ENCODE measurements at regions of chr2 and their contacts with region 1.

Region 1: GRCh38 chr2:144834998-144835633 is 315.2 kb upstream of the ZEB2 start:
- DNase-seq: no peak
- H3K4me3 ChIP-seq: peak overlapping the region in 2 of 3 donors; percentile 4 to 25
- H3K27ac ChIP-seq: peak overlapping the region in 1 of 2 donors; percentile 28
- H3K4me1 ChIP-seq: no peaks in the 10 kb centered on the region
- H3K27me3 ChIP-seq: no peaks in the 10 kb centered on the region
- CTCF ChIP-seq: no peak
- POLR2A ChIP-seq: no peak

Region 2: DNA sequence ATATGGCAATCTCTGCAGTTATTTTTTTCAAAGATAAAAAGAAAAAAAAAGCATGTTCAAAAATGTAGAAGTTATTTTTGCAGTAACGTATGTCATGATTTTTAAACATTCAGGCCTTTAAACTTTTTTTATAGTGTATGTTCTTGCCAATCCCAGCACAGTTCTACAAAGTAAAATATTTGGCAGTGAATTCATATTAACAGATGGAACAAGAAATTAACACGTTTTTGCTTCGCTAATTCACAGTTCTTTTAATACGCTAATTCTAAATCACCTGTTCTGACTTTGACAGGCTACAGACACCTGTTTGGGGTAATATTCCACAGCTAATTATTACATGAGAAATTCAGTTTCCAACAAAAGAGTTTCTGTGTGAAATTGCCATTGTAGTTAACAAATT is 1522.7 kb before region 1 on chr2:
- intact Hi-C with region 1: no loop called
- DNase-seq: no peak
- H3K4me3 ChIP-seq: no peak overlapping the region
- H3K27ac ChIP-seq: no peak overlapping the region
- H3K4me1 ChIP-seq: no peaks in the 10 kb centered on the region
- H3K27me3 ChIP-seq: no peaks in the 10 kb centered on the region
- CTCF ChIP-seq: no peak
- POLR2A ChIP-seq: no peak

Region 3: DNA sequence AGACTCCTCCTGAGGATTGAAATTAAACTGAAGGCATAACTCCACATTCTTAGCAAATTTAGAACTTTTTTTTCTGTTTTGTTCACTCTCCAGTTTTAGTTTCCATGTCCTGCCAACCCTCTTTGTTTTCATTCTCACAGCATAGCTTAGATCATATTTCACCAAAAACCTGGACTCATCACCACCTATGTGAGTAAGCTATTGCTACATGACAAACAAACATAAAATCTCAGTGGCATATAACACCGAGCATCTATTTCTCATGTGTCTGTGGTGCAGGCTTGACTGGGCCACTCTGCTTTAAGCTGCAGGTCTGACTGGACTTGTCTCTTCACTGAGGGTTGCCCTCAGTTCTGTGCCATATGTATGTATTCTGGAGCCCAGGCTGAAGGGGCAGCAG is 1320.7 kb before region 1 on chr2:
- intact Hi-C with region 1: no loop called
- DNase-seq: no peak
- H3K4me3 ChIP-seq: no peak overlapping the region
- H3K27ac ChIP-seq: no peak overlapping the region
- H3K4me1 ChIP-seq: no peaks in the 10 kb centered on the region
- H3K27me3 ChIP-seq: no peaks in the 10 kb centered on the region
- CTCF ChIP-seq: no peak
- POLR2A ChIP-seq: no peak

Region 4: DNA sequence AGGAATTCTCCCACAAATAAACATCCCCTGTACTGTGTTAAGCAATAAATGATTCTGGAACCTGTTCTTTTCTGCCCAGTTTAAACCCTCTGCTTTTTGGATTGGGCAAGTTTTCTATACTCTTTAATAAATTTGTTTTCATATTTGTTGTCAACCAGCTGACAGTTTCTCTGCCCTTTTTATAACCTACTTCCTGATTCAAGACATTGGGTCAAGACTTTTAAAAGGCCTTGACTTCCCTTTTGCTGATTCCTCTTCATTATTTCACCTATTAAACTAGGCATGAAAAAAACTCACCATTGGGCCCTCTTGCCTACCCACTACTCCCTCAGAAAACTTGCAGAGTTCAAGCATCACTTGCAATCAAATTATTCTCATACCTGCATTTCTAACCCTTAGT is 1246.4 kb before region 1 on chr2:
- intact Hi-C with region 1: loop called (anchors 5 kb)
- DNase-seq: no peak
- H3K4me3 ChIP-seq: no peak overlapping the region
- H3K27ac ChIP-seq: no peak overlapping the region
- H3K4me1 ChIP-seq: no peaks in the 10 kb centered on the region
- H3K27me3 ChIP-seq: no peaks in the 10 kb centered on the region
- CTCF ChIP-seq: no peak
- POLR2A ChIP-seq: no peak

Measured in breast epithelium (tissue), 4 donors.